CD8-positive, alpha-beta memory T cell (primary cell): ENCODE measurements at regions of chr6 and their contacts with region 1.

Region 1: DNA sequence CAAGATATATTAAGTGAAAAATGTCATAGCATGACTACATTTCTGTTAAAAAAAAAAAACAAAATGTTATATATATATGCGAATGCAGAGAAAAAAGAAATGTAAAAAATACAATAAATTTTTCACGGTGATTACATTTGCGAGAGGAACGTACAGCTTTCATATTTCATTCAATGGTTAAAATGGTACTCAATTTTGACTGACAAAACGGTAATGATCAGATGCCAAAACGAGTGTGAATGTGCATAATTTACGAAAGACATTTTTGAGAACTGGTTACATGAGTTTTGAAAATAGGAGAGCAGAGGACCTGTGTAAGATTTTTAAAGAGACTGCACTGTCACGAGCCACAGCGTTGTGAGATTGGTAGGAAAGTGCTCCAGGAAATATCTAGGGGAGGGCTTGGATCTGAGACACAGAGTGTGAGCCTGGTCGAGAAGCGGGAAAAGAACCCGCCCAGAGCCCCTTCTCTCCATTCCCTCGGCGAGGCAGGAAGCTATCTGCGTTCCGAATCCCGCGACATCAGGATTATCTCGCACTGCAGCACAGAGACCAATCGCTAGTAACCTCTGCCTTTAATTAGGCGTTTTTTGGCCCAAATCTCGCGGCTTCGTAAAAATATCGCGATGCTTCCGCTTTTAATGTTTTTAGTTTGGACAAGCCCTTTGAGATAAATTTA is 28.5 kb downstream of the TRIM27 start:
- DNase-seq: peak; percentile 78 to 96 (median 90)
- H3K4me3 ChIP-seq: peak overlapping the region; percentile 91
- H3K4me3 Mint-ChIP-seq: peak overlapping the region; percentile 98 to 100 (median 99)
- H3K27ac ChIP-seq: peak overlapping the region; percentile 99
- H3K27ac Mint-ChIP-seq: peak overlapping the region; percentile 99 to 100 (median 99)
- H3K4me1 ChIP-seq: peaks cover 7% of the 10 kb centered on the region
- H3K4me1 Mint-ChIP-seq: peaks cover 15 to 27% (median 22%) of the 10 kb centered on the region in 3 donors
- H3K27me3 ChIP-seq: no peaks in the 10 kb centered on the region
- H3K27me3 Mint-ChIP-seq: peaks cover 3 to 10% of the 10 kb centered on the region in 2 donors

Region 2: DNA sequence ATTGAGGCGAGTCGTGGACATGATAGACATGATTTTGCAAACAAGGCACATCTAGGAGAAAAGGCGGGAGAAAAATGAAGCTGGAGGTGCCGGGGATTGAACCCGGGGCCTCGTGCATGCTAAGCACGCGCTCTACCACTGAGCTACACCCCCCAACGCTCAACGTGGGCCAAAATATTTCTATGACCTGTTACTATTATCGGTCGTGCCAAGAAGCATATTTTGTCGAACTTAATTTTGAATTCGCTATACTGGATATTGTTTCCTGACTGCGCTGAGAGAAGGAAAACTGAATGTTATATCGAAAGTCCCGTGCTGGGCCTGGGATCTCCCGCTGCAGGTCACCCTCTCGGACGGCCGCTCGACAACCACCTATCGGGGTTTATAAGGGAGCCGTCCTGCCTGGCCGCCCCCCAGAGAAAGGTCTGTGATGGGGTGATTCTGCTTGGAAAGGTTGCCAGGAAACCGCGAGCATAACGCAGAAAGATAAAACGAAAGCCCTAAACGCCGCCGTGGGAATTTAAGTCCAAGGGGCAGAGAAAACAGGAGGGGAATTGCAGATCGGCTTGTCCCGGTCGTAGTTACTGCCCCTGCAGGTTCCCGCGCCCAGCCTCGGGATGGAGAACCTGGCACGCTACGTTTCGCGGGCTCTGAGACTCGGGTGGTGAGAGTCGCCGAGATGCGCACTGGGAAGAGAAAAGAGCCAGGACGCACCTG is 31.5 kb before region 1 on chr6:
- CTCF ChIA-PET with region 1: interaction called, 14 read pairs
- POLR2A ChIA-PET with region 1: interaction called, 31 read pairs
- DNase-seq: peak; percentile 55 to 90 (median 85)
- H3K4me3 ChIP-seq: peak overlapping the region; percentile 75
- H3K4me3 Mint-ChIP-seq: peak overlapping the region; percentile 91 to 96 (median 93)
- H3K27ac ChIP-seq: peak overlapping the region; percentile 78
- H3K27ac Mint-ChIP-seq: peak overlapping the region; percentile 75 to 96 (median 92)
- H3K4me1 ChIP-seq: peaks cover 24% of the 10 kb centered on the region
- H3K4me1 Mint-ChIP-seq: peaks cover 37 to 52% (median 42%) of the 10 kb centered on the region in 3 donors
- H3K27me3 ChIP-seq: no peaks in the 10 kb centered on the region
- H3K27me3 Mint-ChIP-seq: peaks cover 2 to 14% of the 10 kb centered on the region in 2 donors

Region 3: DNA sequence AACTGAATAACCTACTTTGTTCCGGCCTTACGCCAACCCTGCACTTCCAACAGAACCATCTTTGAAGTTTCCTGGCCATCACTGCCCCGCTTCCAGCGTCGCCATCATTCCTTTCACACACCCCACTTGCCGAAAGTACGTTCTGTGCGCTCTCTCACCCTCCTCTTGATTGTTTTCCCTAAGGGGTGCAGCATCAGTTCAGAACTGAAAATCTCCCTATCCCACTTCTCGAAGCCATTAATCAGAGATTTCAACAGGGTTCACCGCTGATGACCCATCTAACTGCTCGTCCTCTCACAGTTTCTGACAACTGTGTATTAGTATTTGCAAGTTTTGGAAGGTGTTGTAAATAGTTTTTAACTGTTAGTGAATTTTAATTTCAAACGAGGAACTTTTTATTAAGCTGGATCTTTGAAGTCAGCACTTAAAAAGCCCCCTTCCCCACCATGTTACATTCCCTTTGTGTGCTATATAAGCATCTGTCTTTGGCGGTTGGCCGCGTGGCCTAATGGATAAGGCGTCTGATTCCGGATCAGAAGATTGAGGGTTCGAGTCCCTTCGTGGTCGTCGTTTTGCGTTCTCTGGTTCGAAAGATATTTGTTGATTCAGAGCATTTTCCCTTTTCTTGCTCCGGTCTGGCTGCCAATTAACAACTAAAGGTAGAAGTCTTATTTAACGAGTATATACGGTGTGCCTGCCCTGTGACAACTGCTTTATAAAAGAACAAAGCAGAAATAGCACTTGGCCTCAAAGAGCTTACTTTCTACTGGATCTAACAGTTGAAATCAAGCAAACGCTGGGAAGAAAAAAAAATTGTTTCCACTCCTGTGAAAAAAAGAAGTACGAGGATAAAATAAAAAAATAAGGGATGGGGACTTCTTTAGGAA is 14.1 kb before region 1 on chr6:
- CTCF ChIA-PET with region 1: interaction called, 27 read pairs
- POLR2A ChIA-PET with region 1: interaction called, 32 read pairs
- DNase-seq: peak in 3 of 5 donors; percentile 23 to 64 (median 55)
- H3K4me3 ChIP-seq: peak overlapping the region; percentile 25
- H3K4me3 Mint-ChIP-seq: peak overlapping the region; percentile 59 to 82 (median 74)
- H3K27ac ChIP-seq: no peak overlapping the region
- H3K27ac Mint-ChIP-seq: peak overlapping the region in 4 of 8 donors; percentile 66 to 87 (median 74)
- H3K4me1 ChIP-seq: peaks cover 34% of the 10 kb centered on the region
- H3K4me1 Mint-ChIP-seq: peaks cover 33 to 47% (median 38%) of the 10 kb centered on the region in 3 donors
- H3K27me3 ChIP-seq: no peaks in the 10 kb centered on the region
- H3K27me3 Mint-ChIP-seq: peaks cover 17% of the 10 kb centered on the region in 2 donors

Region 4: DNA sequence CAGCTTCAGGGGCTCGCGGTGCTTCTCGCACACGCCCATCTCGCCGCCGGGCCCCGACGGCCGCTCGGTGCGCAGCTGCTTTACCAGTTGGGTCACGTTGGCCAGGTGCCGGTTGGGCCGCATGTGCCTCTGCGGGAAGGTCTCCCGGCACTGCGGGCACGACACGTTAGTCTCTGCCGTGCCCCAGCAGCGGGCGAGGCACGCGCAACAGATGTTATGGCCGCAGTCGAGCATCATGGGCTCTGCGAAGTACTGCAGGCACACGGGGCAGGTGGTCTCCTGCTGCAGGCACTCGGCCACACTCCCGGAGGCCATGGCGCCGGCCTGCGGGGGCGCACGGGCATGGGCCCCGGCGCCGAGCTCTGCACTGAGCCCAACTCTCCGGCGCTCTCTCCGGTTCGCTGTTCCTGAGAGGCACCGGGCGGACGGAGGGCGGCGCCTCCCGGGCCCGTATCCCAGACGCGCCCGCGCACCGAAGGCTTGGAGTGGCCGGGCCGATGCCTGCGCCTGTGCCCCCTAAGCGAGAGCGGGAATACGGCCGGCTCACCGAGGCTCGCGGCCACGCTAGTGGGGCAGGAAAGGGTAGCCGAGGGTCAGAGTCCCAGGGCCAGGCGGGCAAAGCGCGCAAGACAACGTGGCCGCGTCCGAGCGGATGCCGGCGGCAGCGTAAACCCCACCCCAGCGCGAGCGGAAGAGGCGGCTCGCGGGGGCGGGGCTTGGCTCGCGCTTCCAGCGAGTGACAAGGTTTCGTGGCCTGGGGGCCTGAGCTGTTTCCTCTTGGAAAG is 28.2 kb after region 1 on chr6 and contains the start of gene TRIM27:
- CTCF ChIA-PET with region 1: interaction called, 22 read pairs
- POLR2A ChIA-PET with region 1: interaction called, 24 read pairs
- DNase-seq: peak; percentile 73 to 85 (median 75)
- H3K4me3 ChIP-seq: peak within 1 kb of the TSS; percentile 59
- H3K4me3 Mint-ChIP-seq: peak within 1 kb of the TSS; percentile 90 to 98 (median 95)
- H3K27ac ChIP-seq: peak within 1 kb of the TSS; percentile 72
- H3K27ac Mint-ChIP-seq: peak within 1 kb of the TSS; percentile 87 to 97 (median 94)
- H3K4me1 ChIP-seq: peaks cover 42% of the 10 kb centered on the region
- H3K4me1 Mint-ChIP-seq: peaks cover 31 to 48% (median 44%) of the 10 kb centered on the region in 3 donors
- H3K27me3 ChIP-seq: no peaks in the 10 kb centered on the region
- H3K27me3 Mint-ChIP-seq: peaks cover 0 to 4% of the 10 kb centered on the region in 2 donors
- total RNA-seq, gene TRIM27: 67.7 to 69.2 TPM

Region 5: GRCh38 chr6:28940858-28941680 is 45.8 kb after region 1 on chr6:
- CTCF ChIA-PET with region 1: interaction called, 9 read pairs
- POLR2A ChIA-PET with region 1: interaction called, 19 read pairs
- DNase-seq: peak; percentile 48 to 82 (median 81)
- H3K4me3 ChIP-seq: peak overlapping the region; percentile 84
- H3K4me3 Mint-ChIP-seq: peak overlapping the region; percentile 89 to 98 (median 93)
- H3K27ac ChIP-seq: peak overlapping the region; percentile 86
- H3K27ac Mint-ChIP-seq: peak overlapping the region; percentile 91 to 97 (median 94)
- H3K4me1 ChIP-seq: peaks cover 35% of the 10 kb centered on the region
- H3K4me1 Mint-ChIP-seq: peaks cover 42 to 58% (median 52%) of the 10 kb centered on the region in 3 donors
- H3K27me3 ChIP-seq: no peaks in the 10 kb centered on the region
- H3K27me3 Mint-ChIP-seq: peaks cover 0 to 20% of the 10 kb centered on the region in 2 donors